ENCODE measurements at regions of chrX and their contacts with region 1.

Region 1: GRCh38 chrX:19334945-19335626 is 8.6 kb upstream of the PDHA1 start:
- H3K4me3 ChIP-seq: no peak overlapping the region
- H3K27ac ChIP-seq: no peak overlapping the region
- H3K4me1 ChIP-seq: no peaks in the 10 kb centered on the region
- CTCF ChIP-seq: no peak

Region 2: GRCh38 chrX:18410043-18410442 is 925.0 kb before region 1 on chrX:
- CTCF ChIA-PET with region 1: interaction called, 10 read pairs
- POLR2A ChIA-PET with region 1: no interaction called
- H3K4me3 ChIP-seq: no peak overlapping the region
- H3K27ac ChIP-seq: no peak overlapping the region
- H3K4me1 ChIP-seq: no peaks in the 10 kb centered on the region
- CTCF ChIP-seq: no peak

Region 3: DNA sequence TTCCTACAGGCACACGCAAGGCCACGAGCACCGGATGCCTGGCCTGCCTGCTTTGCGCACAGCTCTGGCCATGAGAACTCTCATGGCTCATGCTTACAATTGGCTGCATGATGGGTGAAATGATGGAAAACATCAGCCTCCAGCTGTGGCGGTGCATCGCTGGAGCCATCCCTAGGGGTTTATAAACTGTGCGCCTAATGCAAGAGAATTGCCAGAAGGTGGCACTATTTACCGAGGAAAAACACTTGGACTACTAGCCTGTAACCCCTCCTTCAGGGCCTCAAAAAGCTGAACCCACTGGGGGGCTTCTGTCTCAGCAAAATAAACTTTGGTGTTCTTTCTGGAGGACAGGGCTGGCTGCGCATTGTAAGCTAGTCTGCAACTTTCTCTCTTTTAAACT is 403.1 kb before region 1 on chrX:
- CTCF ChIA-PET with region 1: interaction called, 10 read pairs
- POLR2A ChIA-PET with region 1: no interaction called
- H3K4me3 ChIP-seq: no peak overlapping the region
- H3K27ac ChIP-seq: no peak overlapping the region
- H3K4me1 ChIP-seq: no peaks in the 10 kb centered on the region
- CTCF ChIP-seq: no peak

Region 4: DNA sequence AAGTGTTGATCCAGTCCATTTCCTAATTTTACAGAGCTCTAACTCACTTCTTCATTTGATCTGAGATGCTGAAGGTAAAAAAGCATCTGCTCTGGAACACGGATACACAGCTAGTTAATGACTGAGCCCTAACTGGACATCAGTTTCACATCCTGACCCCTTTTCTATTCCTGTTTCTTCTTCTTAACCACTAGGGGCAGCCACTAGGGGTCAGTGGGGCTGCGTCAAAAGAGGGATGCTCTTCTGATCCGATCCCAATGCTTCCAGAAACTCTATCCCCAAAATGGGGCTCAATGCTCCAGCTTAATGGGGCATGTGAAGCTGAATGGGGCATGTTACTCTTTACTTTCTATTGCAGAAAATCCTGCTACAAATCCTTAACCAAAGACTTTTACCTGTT is 317.8 kb before region 1 on chrX:
- CTCF ChIA-PET with region 1: interaction called, 25 read pairs
- POLR2A ChIA-PET with region 1: no interaction called
- H3K4me3 ChIP-seq: no peak overlapping the region
- H3K27ac ChIP-seq: no peak overlapping the region
- H3K4me1 ChIP-seq: no peaks in the 10 kb centered on the region
- CTCF ChIP-seq: peak; percentile 30

Region 5: GRCh38 chrX:19040373-19040772 is 294.7 kb before region 1 on chrX:
- CTCF ChIA-PET with region 1: interaction called, 15 read pairs
- POLR2A ChIA-PET with region 1: no interaction called
- H3K4me3 ChIP-seq: no peak overlapping the region
- H3K27ac ChIP-seq: no peak overlapping the region
- H3K4me1 ChIP-seq: no peaks in the 10 kb centered on the region
- CTCF ChIP-seq: no peak

Region 6: GRCh38 chrX:19350941-19351384 is 15.9 kb after region 1 on chrX:
- CTCF ChIA-PET with region 1: no interaction called
- POLR2A ChIA-PET with region 1: no interaction called
- H3K4me3 ChIP-seq: no peak overlapping the region
- H3K27ac ChIP-seq: no peak overlapping the region
- H3K4me1 ChIP-seq: no peaks in the 10 kb centered on the region
- CTCF ChIP-seq: no peak

Region 7: DNA sequence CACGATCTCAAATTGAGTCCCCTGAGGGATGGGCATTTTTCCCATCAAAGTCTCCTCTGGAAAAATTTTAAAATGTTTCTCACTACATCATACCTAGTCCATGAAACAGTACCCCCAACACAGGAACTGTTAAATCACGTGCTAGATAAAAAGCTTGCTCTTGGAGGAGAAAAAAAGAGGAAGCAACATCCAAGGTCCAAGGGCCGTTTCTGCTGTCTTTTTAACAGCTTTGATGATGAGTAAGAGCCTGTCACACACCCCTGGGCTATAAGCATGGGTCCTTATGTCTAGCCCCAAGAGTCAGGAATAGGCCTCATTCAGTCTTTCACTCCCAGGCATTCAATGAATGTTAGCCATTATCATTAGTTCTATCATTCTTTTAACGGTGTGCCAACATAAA is 423.5 kb after region 1 on chrX:
- CTCF ChIA-PET with region 1: no interaction called
- POLR2A ChIA-PET with region 1: no interaction called
- H3K4me3 ChIP-seq: no peak overlapping the region
- H3K27ac ChIP-seq: no peak overlapping the region
- H3K4me1 ChIP-seq: peaks cover 9% of the 10 kb centered on the region; the same call in 1 of the 2 replicates
- CTCF ChIP-seq: no peak